Sciatic nerve (tissue), 2 donors: ENCODE measurements at regions of chr14 and their contacts with region 1.

Region 1: GRCh38 chr14:78164238-78164853 is 5.8 kb upstream of the NRXN3 start:
- DNase-seq: no peak
- ATAC-seq: no peak

Region 2: DNA sequence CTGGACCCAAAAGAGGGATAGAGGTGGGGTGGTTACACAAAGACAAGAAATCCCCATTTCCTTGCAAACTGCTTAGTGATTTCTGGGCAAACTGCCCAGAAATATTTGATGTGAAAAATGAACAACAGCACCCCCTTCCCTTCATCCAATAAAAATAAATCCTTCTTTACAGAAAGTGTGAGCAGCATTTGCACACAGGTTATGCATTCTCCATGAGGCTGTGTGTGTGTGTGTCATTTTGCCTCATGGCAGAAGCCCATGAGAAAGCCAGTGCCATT is 11.3 kb before region 1 on chr14:
- intact Hi-C with region 1: loop called (anchors 1 kb)
- DNase-seq: no peak
- ATAC-seq: no peak

Region 3: DNA sequence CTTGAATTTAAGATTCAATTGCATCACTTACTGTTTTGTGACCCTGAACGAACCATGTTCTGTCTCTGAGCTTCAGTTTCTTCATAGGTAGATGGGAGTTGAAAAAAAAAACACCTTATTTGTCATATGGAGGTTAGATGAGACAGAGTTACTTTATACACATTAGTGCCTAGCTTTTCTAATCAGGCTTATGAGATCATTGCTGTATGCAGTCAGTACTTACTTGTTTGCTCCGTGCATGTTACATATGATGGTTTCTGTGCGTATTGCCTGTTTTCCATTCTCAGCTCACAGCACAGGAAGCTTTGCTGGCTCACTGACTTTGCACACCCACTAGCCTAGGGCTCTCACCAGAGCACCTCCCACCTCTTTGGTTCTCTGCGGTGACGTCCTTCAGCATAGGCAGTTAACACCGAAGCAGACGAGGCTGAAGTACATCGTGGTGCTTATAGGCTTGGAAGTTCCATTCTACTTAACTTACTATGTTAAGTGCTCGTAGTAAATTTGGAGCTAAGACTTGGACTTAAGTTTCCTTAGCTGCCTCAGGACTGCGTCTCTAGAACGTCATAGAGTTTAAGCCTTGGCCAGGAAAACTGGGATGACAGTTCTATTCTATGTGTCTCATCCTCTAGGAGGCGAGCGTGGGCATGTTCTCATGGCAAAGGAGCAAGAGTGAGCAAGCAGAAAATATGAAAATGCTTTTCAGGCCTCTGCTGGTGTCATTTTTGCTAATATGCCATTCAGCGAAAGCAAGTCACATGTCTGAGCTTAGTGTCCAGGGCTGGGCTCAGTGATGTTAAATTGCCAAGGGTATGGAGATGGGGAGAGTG is 63.1 kb after region 1 on chr14:
- intact Hi-C with region 1: no loop called
- DNase-seq: no peak
- ATAC-seq: no peak